ENCODE measurements at regions of chr21 and their contacts with region 1.

Region 1: DNA sequence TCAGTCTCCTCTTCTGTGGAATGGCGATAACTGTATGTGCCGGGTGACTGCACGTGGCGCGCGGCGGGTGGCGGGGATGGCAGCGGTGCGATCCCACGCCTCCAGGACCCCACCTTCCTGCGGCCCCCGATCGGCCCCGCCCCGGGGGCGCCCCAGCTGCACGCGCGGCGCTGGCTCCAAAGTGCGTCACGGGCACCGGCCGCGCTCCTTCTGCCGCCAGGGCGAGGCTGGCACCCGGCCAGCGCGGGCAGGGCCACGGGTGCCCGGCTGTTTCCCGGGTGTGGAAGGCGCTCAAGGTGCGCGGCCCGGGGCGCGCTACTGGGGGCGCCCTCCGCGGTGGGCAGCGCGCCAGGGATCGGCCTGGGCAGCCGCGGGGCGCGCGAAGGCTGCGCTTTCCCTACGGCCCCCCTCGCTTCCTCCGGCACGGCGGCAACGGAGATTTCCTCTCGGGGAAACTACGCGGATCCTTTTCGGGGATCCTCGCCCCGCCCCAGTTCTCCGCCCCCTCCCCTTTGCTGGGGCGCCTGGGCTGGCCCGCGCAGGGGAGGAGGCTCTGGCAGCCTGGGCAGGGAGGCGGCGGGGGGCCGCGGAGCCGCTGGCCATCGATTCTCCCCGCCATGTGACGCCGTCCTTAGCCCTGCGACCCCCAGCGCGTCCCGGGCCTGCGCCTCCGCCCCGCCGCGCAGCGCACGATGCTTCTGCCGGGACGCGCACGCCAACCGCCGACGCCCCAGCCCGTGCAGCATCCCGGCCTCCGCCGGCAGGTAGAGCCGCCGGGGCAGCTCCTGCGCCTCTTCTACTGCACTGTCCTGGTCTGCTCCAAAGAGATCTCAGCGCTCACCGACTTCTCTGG is at the start of gene EVA1C:
- DNase-seq: peak; percentile 69
- H3K4me3 ChIP-seq: peak within 1 kb of the TSS; percentile 46 to 81 (median 73)
- H3K27ac ChIP-seq: peak within 1 kb of the TSS; percentile 99
- H3K4me1 ChIP-seq: peaks cover 35% of the 10 kb centered on the region
- H3K27me3 ChIP-seq: no peaks in the 10 kb centered on the region
- CTCF ChIP-seq: peak in 1 of 2 donors; percentile 11
- POLR2A ChIP-seq: no peak
- total RNA-seq, gene EVA1C: 31.7 and 38.6 TPM in 2 replicates

Region 2: DNA sequence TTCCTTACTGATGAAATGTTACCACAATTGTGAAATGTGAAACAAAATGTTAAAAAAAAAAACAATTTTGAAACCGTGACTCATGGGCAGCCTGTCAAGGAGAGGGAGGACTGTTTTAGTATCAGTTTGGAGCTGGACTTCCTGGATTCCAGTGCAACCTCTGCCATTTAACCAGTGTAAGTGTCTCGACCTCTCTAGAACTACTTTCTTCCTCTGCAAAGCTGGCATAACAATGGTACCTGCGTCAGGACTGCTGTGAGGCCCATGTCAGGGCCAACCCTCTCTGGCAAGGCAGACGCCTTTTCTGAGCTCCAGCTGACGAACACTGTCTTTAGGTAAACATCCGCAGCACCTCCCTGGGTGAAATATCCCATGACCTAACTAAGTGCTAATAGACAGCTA is 40.5 kb before region 1 on chr21:
- CTCF ChIA-PET with region 1: no interaction called
- POLR2A ChIA-PET with region 1: no interaction called
- dilution Hi-C with region 1: no loop called
- intact Hi-C with region 1: no loop called
- DNase-seq: peak; percentile 98
- H3K4me3 ChIP-seq: no peak overlapping the region
- H3K27ac ChIP-seq: peak overlapping the region; percentile 93
- H3K4me1 ChIP-seq: peaks cover 29% of the 10 kb centered on the region
- H3K27me3 ChIP-seq: no peaks in the 10 kb centered on the region
- CTCF ChIP-seq: no peak
- POLR2A ChIP-seq: peak; percentile 43

Region 3: DNA sequence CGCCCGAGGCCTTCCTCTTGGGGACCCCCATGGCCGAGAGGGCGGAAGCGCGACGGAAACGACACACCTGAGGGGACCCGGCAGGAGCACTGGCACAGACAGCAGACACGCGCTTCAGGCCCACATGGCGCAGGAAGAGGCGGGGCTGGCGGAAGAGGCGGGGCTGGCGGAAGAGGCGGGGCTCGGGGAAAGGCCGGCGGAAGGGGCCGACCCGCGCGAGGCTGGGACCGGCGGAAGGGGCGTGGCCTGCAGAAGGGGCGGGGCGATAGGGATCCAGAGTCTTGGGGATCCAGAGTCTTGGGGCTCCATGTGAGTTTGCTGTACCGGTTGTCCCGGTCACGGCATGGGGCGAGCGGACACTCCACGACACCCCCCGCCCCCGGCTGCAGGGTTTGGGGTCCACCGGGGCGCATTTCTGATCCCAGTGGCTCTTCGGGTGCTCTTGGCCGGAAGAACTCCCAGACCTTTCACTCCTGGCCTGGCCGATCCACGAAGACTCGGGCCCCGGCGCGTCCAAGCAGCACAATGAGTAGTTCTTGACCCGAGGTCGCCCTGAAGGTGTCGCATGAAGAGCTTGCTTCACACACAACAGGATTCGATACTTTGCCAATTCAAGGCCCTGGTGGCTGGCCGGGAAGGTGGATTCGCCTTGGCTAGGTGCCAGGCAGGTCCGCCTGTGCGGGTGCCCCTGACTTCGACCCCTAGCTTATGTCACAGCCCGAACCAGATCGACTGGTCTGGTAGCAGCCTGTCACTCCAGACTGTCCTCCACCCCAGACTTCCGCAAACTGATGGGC is 19.3 kb before region 1 on chr21 and contains the start of gene URB1:
- CTCF ChIA-PET with region 1: interaction called, 5 read pairs
- POLR2A ChIA-PET with region 1: no interaction called
- dilution Hi-C with region 1: no loop called
- intact Hi-C with region 1: loop called (anchors 1 kb)
- DNase-seq: peak; percentile 87
- H3K4me3 ChIP-seq: peak within 1 kb of the TSS; percentile 75 to 79 (median 78)
- H3K27ac ChIP-seq: peak within 1 kb of the TSS; percentile 62
- H3K4me1 ChIP-seq: peaks cover 13% of the 10 kb centered on the region
- H3K27me3 ChIP-seq: no peaks in the 10 kb centered on the region
- CTCF ChIP-seq: no peak
- POLR2A ChIP-seq: peak; percentile 92
- total RNA-seq, gene URB1: 21.4 and 27.3 TPM in 2 replicates

Region 4: DNA sequence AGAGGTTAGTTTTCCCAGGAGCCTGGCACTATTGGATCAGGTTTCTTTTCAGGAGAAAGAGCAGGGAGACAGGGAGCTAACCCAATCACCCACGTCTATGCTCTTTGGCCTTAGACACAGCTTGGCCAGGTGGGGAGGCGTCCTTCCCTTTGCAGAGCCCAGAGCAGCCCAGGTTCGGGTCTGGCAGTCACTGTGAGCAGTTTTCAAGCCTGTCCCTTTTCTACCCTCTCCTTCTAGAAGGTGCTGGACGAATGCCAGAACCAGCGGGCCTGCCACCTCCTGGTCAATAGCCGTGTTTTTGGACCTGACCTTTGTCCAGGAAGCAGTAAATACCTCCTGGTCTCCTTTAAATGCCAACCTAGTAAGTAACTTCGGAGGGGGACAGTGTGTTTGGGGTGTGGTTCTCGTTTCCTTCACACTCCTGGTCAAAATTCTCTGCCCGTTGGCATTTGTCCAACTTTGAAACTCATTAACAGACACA is 45.0 kb after region 1 on chr21:
- CTCF ChIA-PET with region 1: interaction called, 8 read pairs
- POLR2A ChIA-PET with region 1: no interaction called
- dilution Hi-C with region 1: no loop called
- intact Hi-C with region 1: loop called (anchors 2 kb)
- DNase-seq: peak; percentile 61
- H3K4me3 ChIP-seq: no peak overlapping the region
- H3K27ac ChIP-seq: peak overlapping the region; percentile 69
- H3K4me1 ChIP-seq: peaks cover 23% of the 10 kb centered on the region
- H3K27me3 ChIP-seq: no peaks in the 10 kb centered on the region
- CTCF ChIP-seq: no peak
- POLR2A ChIP-seq: no peak

Region 5: DNA sequence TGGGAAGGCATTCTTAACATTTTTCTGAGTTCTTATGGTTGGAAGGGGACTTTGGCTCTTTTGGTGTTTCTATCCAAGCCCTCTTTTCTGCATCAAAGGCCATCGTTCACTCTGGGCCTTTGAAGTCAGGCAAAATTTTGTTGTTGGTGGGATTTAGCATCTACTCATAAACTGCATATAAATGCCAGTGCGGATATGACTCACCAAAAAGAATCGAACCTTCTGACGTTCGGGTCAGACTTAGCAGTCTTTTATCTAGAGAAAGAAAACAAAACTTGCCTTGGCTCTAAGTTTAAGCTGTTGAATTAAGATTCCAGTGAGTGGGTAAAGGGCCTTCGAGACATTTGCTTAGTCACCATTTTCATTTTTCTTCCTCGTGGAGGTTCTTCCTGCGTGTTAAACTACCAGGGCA is 51.5 kb after region 1 on chr21:
- CTCF ChIA-PET with region 1: interaction called, 3 read pairs
- POLR2A ChIA-PET with region 1: no interaction called
- dilution Hi-C with region 1: no loop called
- intact Hi-C with region 1: loop called (anchors 1 kb)
- DNase-seq: peak; percentile 95
- H3K4me3 ChIP-seq: no peak overlapping the region
- H3K27ac ChIP-seq: peak overlapping the region; percentile 99
- H3K4me1 ChIP-seq: peaks cover 28% of the 10 kb centered on the region
- H3K27me3 ChIP-seq: no peaks in the 10 kb centered on the region
- CTCF ChIP-seq: no peak
- POLR2A ChIP-seq: peak; percentile 26

Region 6: DNA sequence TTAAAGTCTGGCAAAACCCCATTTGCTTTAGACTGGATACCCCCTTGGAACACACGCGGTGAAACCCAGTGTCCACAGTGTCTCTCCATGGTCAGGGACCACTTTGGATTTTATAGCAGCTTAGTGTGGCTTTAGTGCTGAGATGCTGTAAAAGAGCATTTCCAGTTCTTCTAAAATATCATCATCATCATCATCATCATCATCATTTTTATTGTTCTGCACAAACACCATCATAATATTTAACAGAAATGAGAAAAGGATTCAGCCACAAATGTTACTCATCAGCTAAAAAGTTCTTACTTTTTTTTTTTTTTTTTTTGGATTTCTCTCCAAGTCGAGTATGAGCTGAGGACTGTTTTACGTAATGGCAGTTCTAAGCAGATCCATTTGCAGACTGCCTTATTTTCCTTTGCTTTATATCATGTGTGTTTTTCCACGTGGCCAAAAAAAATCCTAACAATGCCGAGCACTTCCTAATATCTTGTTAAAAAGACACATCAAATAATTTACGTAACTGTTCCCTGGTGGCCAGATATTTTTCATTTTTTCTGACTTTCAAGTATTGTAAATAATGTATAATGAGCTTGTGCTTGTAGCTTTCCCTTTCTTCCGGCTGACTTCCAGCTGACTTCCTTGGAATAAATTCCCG is 62.9 kb after region 1 on chr21:
- CTCF ChIA-PET with region 1: interaction called, 9 read pairs
- POLR2A ChIA-PET with region 1: interaction called, 4 read pairs
- dilution Hi-C with region 1: no loop called
- intact Hi-C with region 1: loop called (anchors 2 kb)
- DNase-seq: peak; percentile 86
- H3K4me3 ChIP-seq: peak overlapping the region in 1 of 3 experiments; percentile 36
- H3K27ac ChIP-seq: peak overlapping the region; percentile 66
- H3K4me1 ChIP-seq: peaks cover 46% of the 10 kb centered on the region
- H3K27me3 ChIP-seq: no peaks in the 10 kb centered on the region
- CTCF ChIP-seq: no peak
- POLR2A ChIP-seq: no peak

Region 7: DNA sequence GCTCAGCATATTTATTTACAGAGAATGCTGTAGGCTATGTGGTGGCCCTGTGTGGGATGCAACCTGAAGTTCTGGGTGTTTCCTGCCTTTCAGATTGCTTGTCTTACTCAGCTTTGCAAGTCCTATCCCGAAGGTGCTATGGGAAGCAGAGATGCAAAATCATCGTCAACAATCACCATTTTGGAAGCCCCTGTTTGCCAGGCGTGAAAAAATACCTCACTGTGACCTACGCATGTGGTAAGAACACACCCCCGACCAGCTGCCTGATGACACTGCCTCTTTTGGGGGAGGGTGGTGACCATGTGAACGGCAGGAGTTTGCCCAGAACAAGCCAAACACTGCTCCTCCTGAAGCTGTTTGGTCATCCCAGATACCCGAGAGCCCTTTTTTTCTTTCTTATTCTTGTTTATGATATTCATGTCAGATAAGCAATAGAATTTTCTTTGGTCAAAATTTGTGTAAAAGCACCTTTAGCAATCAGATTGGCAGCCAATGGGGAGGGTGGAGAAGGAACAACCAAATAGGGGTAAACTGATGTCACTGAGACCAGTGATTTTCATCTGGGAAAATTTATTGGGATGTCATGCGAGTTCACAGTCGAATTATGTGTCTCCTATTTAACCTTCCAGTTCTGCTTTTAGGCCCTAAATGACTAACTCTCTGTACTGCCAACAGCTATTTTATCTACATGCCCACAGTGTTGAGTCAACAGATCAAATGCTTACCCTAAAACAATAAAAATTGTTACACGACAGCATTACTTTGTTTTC is 82.7 kb after region 1 on chr21:
- CTCF ChIA-PET with region 1: interaction called, 9 read pairs
- POLR2A ChIA-PET with region 1: no interaction called
- dilution Hi-C with region 1: no loop called
- intact Hi-C with region 1: loop called (anchors 1 kb)
- DNase-seq: peak; percentile 91
- H3K4me3 ChIP-seq: no peak overlapping the region
- H3K27ac ChIP-seq: peak overlapping the region; percentile 95
- H3K4me1 ChIP-seq: peaks cover 73% of the 10 kb centered on the region
- H3K27me3 ChIP-seq: no peaks in the 10 kb centered on the region
- CTCF ChIP-seq: no peak
- POLR2A ChIP-seq: peak; percentile 20

Region 8: DNA sequence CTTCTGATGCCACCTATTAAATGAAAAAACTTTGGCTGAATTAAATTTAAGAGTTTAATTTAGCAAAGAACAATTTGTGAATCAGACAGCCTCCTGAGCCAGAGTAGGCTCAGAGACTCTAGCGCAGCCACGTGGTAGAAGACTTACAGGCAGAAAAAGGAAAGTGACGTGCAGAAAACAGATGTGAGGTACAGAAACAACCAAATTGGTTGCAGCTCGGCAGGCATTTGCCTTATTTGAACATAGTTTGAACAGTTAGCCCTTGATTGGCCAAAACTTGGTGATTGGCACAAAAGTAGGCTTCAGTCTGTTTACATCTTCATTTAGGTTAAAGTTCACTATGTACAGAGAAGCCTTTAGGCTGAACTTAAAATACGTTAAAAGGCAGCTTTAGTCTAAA is 150.0 kb after region 1 on chr21:
- CTCF ChIA-PET with region 1: interaction called, 53 read pairs
- POLR2A ChIA-PET with region 1: no interaction called
- dilution Hi-C with region 1: no loop called
- intact Hi-C with region 1: loop called (anchors 1 kb)
- DNase-seq: peak; percentile 84
- H3K4me3 ChIP-seq: no peak overlapping the region
- H3K27ac ChIP-seq: peak overlapping the region; percentile 22
- H3K4me1 ChIP-seq: peaks cover 6% of the 10 kb centered on the region
- H3K27me3 ChIP-seq: no peaks in the 10 kb centered on the region
- CTCF ChIP-seq: peak; percentile 48 to 61
- POLR2A ChIP-seq: no peak